Sigmoid colon (tissue), 7 donors: ENCODE measurements at regions of chr7 and their contacts with region 1.

Region 1: GRCh38 chr7:18590744-18591340 is 95.3 kb downstream of the HDAC9 start:
- DNase-seq: no peak
- H3K4me3 ChIP-seq: no peak overlapping the region
- H3K27ac ChIP-seq: no peak overlapping the region
- H3K4me1 ChIP-seq: peaks cover 0 to 4% (median 0%) of the 10 kb centered on the region in 4 donors
- H3K27me3 ChIP-seq: no peaks in the 10 kb centered on the region
- CTCF ChIP-seq: peak in 3 of 4 experiments; percentile 24 to 43 (median 38)
- EP300 ChIP-seq: no peak
- POLR2A ChIP-seq: no peak

Region 2: DNA sequence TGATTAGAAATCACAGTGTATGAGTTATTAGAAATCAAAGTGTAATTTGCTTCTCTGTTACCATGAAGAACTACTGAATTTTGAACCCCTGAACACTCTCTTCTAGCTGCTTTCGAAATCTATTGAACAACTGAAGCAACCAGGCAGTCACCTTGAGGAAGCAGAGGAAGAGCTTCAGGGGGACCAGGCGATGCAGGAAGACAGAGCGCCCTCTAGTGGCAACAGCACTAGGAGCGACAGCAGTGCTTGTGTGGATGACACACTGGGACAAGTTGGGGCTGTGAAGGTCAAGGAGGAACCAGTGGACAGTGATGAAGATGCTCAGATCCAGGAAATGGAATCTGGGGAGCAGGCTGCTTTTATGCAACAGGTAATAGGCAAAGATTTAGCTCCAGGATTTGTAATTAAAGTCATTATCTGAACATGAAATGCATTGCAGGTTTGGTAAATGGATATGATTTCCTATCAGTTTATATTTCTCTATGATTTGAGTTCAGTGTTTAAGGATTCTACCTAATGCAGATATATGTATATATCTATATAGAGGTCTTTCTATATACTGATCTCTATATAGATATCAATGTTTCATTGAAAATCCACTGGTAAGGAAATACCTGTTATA is 75.4 kb after region 1 on chr7:
- intact Hi-C with region 1: loop called (anchors 2 kb)
- DNase-seq: peak; percentile 87
- H3K4me3 ChIP-seq: no peak overlapping the region
- H3K27ac ChIP-seq: no peak overlapping the region
- H3K4me1 ChIP-seq: peaks cover 0 to 9% (median 0%) of the 10 kb centered on the region in 4 donors
- H3K27me3 ChIP-seq: no peaks in the 10 kb centered on the region
- CTCF ChIP-seq: peak; percentile 39 to 87 (median 66)
- EP300 ChIP-seq: no peak
- POLR2A ChIP-seq: no peak